K562 (cell line): ENCODE measurements at regions of chr2 and their contacts with region 1.

Region 1: GRCh38 chr2:177618255-177619253 is 226.0 kb downstream of the AGPS start:
- DNase-seq: peak; percentile 93 to 94 (median 94)
- ATAC-seq: peak; percentile 97
- H3K4me3 ChIP-seq: peak overlapping the region; percentile 52
- H3K27ac ChIP-seq: peak overlapping the region; percentile 93
- H3K4me1 ChIP-seq: peaks cover 11 to 17% of the 10 kb centered on the region in 2 experiments; a peak in 4 of 5 replicates
- H3K27me3 ChIP-seq: no peaks in the 10 kb centered on the region
- CTCF ChIP-seq: no peak
- EP300 ChIP-seq: peak; percentile 13; the same call in 1 of the 2 replicates
- POLR2A ChIP-seq: peak; percentile 87
- RAD21 ChIP-seq: no peak; a peak in 1 of 4 replicates

Region 2: DNA sequence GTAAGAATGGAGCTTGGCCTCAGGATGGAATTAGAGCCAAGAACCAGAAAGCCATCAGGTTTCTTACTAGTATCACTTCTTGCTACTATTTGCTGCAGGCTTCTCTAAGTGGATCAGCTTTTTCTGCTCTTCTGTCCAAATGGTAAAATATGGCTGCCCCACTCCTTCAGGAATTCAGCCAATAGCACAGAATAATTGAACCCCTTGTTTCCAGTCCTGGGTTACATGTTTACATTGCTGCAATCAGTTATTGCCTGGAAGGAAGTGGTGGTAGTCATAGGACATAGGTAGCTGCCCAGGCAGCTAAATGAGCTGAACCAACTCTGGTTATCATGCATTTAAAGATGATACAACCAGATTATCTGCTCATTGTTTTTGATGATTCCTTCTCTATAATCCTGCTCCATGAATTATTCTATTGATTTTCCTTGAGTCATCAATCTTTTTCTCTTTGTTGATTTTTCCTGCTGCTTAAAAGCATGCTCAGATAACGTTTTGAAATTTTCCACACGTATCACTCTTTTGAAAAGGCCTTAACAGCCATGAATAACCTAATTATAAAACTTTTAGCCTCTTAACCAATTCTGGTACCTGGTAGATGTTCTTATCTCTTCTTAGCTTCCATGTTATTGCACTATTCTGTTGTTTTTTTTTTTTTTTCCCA is 213.4 kb before region 1 on chr2:
- CTCF ChIA-PET with region 1: no interaction called
- POLR2A ChIA-PET with region 1: no interaction called
- in situ Hi-C with region 1: no loop called
- intact Hi-C with region 1: no loop called
- DNase-seq: no peak
- ATAC-seq: peak; percentile 16; the same call in 1 of the 3 replicates
- H3K4me3 ChIP-seq: no peak overlapping the region
- H3K27ac ChIP-seq: no peak overlapping the region
- H3K4me1 ChIP-seq: peaks cover 0 to 9% of the 10 kb centered on the region in 2 experiments; a peak in 3 of 5 replicates
- H3K27me3 ChIP-seq: no peaks in the 10 kb centered on the region
- CTCF ChIP-seq: no peak
- EP300 ChIP-seq: no peak
- POLR2A ChIP-seq: no peak
- RAD21 ChIP-seq: no peak

Region 3: DNA sequence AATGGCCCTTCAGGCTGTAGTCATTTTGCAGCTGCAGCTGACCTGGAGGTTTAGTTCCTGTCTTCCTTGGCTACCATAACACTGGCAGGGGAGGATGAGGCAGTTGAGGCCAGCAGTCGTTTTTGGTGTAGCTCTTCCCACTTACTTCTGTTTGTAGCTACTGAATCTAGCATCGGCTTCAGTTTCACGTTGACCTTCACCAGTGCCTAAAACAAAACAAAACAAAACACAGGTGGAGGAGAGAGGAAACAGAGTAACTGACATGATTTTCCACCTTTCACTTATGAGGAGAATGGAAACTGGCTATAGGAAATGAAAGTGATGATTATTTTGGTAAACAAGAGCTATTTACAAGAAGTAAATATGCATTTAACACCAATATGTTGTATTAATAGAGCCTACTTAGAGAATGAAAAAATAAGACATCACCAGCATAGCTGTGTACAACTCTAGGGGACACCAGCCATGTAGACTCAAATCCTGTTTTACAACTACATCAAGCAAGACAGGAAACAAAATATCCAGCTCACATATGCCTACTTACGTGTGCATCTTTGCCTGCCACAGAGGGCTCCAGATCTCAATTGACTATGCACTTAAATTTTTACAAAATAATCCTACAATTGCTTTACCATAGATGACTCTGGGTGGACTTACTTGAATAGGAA is 10.9 kb after region 1 on chr2:
- CTCF ChIA-PET with region 1: interaction called, 3 read pairs
- POLR2A ChIA-PET with region 1: interaction called, 10 read pairs
- in situ Hi-C with region 1: no loop called
- intact Hi-C with region 1: no loop called
- DNase-seq: no peak
- ATAC-seq: no peak
- H3K4me3 ChIP-seq: no peak overlapping the region
- H3K27ac ChIP-seq: no peak overlapping the region
- H3K4me1 ChIP-seq: peaks cover 0 to 10% of the 10 kb centered on the region in 2 experiments; a peak in 3 of 5 replicates
- H3K27me3 ChIP-seq: no peaks in the 10 kb centered on the region
- CTCF ChIP-seq: no peak
- EP300 ChIP-seq: no peak
- POLR2A ChIP-seq: no peak
- RAD21 ChIP-seq: no peak